CD8-positive, alpha-beta T cell (primary cell): ENCODE measurements at regions of chr12 and their contacts with region 1.

Region 1: GRCh38 chr12:77800501-77800900 is 30.2 kb upstream of the NAV3 start:
- DNase-seq: no peak
- ATAC-seq: no peak
- H3K4me3 ChIP-seq: no peak overlapping the region
- H3K4me3 Mint-ChIP-seq: no peak overlapping the region
- H3K27ac ChIP-seq: no peak overlapping the region
- H3K27ac Mint-ChIP-seq: no peak overlapping the region
- H3K4me1 ChIP-seq: no peaks in the 10 kb centered on the region
- H3K4me1 Mint-ChIP-seq: no peaks in the 10 kb centered on the region
- H3K27me3 ChIP-seq: no peaks in the 10 kb centered on the region
- H3K27me3 Mint-ChIP-seq: no peaks in the 10 kb centered on the region
- CTCF ChIP-seq: no peak

Region 2: GRCh38 chr12:77816196-77816595 is 15.7 kb after region 1 on chr12:
- CTCF ChIA-PET with region 1: no interaction called
- POLR2A ChIA-PET with region 1: no interaction called
- intact Hi-C with region 1: loop called in 1 of 2 experiments (anchors 1 kb)
- DNase-seq: no peak
- ATAC-seq: no peak
- H3K4me3 ChIP-seq: no peak overlapping the region
- H3K4me3 Mint-ChIP-seq: no peak overlapping the region
- H3K27ac ChIP-seq: no peak overlapping the region
- H3K27ac Mint-ChIP-seq: no peak overlapping the region
- H3K4me1 ChIP-seq: no peaks in the 10 kb centered on the region
- H3K4me1 Mint-ChIP-seq: no peaks in the 10 kb centered on the region
- H3K27me3 ChIP-seq: no peaks in the 10 kb centered on the region
- H3K27me3 Mint-ChIP-seq: no peaks in the 10 kb centered on the region
- CTCF ChIP-seq: no peak

Region 3: GRCh38 chr12:77914081-77914488 is 113.6 kb after region 1 on chr12:
- CTCF ChIA-PET with region 1: no interaction called
- POLR2A ChIA-PET with region 1: no interaction called
- intact Hi-C with region 1: no loop called
- DNase-seq: no peak
- ATAC-seq: no peak
- H3K4me3 ChIP-seq: no peak overlapping the region
- H3K4me3 Mint-ChIP-seq: no peak overlapping the region
- H3K27ac ChIP-seq: no peak overlapping the region
- H3K27ac Mint-ChIP-seq: no peak overlapping the region
- H3K4me1 ChIP-seq: no peaks in the 10 kb centered on the region
- H3K4me1 Mint-ChIP-seq: no peaks in the 10 kb centered on the region
- H3K27me3 ChIP-seq: no peaks in the 10 kb centered on the region
- H3K27me3 Mint-ChIP-seq: no peaks in the 10 kb centered on the region
- CTCF ChIP-seq: no peak